ENCODE measurements at regions of chr6 and their contacts with region 1.

Region 1: DNA sequence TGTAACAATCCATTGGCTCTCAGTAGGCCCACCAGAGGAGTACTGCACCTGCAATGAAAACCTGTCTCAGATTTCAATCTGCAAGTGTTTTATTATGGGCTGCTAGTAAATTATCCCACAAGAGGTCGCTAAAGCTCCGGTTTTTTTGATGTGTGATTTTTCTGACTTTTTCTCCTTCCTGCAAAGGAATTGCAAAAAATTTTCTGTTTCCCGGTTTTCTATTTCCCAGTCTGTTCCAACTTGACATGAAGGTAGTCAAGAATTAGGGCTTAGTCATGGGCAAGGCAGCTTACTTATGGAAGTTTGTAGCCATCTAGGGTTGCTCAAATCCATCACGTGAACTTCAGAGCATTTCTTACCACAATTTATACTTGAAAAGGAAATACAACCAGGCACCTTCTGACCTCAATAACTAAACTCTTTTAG is 38.5 kb upstream of the AHI1 start:
- DNase-seq: peak; percentile 78
- ATAC-seq: peak; percentile 48
- H3K4me3 ChIP-seq: no peak overlapping the region
- H3K27ac ChIP-seq: no peak overlapping the region
- H3K4me1 ChIP-seq: peaks cover 34% of the 10 kb centered on the region
- H3K27me3 ChIP-seq: no peaks in the 10 kb centered on the region
- CTCF ChIP-seq: peak; percentile 74

Region 2: DNA sequence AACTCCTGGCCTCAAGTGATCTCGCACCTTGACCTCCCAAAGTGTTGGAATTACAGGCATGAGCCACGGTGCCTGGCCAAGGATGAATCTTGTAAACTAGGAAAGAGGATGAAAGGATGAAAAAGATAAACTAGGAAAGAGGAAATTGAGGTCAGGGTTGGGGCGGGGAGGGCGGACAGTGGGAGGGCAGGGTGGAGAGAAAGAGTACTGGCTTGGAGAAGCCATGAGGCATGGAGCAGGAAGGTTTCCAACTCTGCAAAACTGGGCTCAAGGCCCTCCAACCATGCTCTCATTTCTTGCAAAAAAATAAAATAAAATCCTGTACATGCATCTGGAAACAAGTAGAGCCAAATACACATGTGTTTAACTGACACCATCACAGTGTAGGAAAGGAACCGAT is 961.5 kb before region 1 on chr6:
- CTCF ChIA-PET with region 1: no interaction called
- POLR2A ChIA-PET with region 1: no interaction called
- intact Hi-C with region 1: no loop called
- DNase-seq: no peak
- ATAC-seq: no peak
- H3K4me3 ChIP-seq: no peak overlapping the region
- H3K27ac ChIP-seq: no peak overlapping the region
- H3K4me1 ChIP-seq: no peaks in the 10 kb centered on the region
- H3K27me3 ChIP-seq: no peaks in the 10 kb centered on the region
- CTCF ChIP-seq: no peak

Region 3: DNA sequence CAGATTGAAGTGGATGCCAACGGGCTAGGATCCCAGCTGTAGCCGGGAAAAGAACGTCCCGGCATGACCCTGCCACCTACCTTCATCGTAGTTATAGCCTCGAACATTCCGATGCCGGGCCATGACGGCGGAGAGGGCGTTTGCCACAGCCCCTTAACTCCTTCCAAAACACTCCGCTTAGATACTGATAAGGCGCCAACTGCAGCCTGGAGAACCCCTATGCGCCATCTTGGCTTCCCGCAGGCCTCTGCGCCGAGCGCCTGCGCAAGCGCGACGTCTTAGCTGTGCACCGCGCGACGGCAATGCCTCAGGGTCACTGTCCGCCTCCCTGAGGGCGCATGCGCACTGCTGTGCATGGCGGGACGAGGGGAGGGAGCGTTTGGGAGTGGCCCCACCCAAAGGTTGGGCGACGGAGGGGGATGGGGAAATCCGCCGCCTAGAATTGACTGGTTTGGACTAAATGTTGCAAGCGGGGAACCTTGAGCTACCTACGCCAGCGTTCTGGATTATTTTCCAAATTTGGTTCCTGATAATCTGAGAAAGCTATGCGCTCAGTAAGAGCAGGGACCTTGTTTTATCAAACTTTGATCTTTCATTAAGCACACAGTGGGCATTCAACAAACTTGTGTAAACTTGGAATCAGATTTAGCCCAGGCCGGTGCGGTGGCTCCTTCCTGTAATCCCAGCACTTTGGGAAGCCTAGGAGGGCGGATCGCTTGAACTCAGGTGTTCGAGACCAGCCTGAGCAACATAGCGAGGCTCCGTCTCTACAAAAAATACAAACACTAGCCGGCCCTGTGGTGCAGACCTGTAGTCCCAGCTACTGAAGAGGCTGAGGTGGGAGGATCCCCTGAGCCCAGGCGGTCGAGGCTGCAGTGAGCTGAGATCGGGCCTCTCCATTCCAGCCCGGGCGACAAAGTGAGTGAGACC is 481.2 kb before region 1 on chr6 and contains the start of gene HBS1L:
- CTCF ChIA-PET with region 1: no interaction called
- POLR2A ChIA-PET with region 1: no interaction called
- intact Hi-C with region 1: no loop called
- DNase-seq: peak; percentile 98
- ATAC-seq: peak; percentile 98
- H3K4me3 ChIP-seq: peak within 1 kb of the TSS; percentile 93
- H3K27ac ChIP-seq: peak within 1 kb of the TSS; percentile 31
- H3K4me1 ChIP-seq: peaks cover 12% of the 10 kb centered on the region
- H3K27me3 ChIP-seq: no peaks in the 10 kb centered on the region
- CTCF ChIP-seq: no peak
- total RNA-seq, gene HBS1L: 44.9 and 53.2 TPM in 2 replicates

Region 4: DNA sequence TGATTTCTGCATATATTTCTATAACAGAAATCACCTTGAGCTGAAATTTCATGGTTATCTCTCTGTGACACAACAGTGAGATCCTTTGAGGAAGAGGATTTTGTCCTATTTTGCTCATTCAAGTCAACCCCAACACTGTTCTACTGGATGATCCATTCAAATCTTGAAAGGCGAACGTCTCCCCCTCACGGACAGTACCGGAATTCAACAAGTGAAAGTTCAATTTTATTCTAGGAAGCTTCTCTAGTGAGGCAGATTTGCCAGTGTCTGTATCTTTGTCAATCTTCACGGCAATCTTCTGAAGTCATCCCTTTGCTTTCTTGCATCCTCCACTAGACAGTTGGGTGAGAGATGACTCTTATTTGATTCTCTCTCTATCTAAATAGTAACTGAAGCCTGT is 223.8 kb after region 1 on chr6:
- CTCF ChIA-PET with region 1: no interaction called
- POLR2A ChIA-PET with region 1: no interaction called
- intact Hi-C with region 1: loop called (anchors 2 kb)
- DNase-seq: peak; percentile 65
- ATAC-seq: no peak
- H3K4me3 ChIP-seq: no peak overlapping the region
- H3K27ac ChIP-seq: no peak overlapping the region
- H3K4me1 ChIP-seq: no peaks in the 10 kb centered on the region
- H3K27me3 ChIP-seq: no peaks in the 10 kb centered on the region
- CTCF ChIP-seq: peak; percentile 62

Region 5: GRCh38 chr6:135851442-135852271 is 315.7 kb after region 1 on chr6 and contains the start of gene PDE7B:
- CTCF ChIA-PET with region 1: no interaction called
- POLR2A ChIA-PET with region 1: no interaction called
- intact Hi-C with region 1: loop called (anchors 10 kb)
- DNase-seq: peak; percentile 71
- ATAC-seq: peak; percentile 98
- H3K4me3 ChIP-seq: peak within 1 kb of the TSS; percentile 60
- H3K27ac ChIP-seq: no peak within 1 kb of the TSS
- H3K4me1 ChIP-seq: peaks cover 11% of the 10 kb centered on the region
- H3K27me3 ChIP-seq: no peaks in the 10 kb centered on the region
- CTCF ChIP-seq: no peak
- total RNA-seq, gene PDE7B: not detected in 2 replicates

Region 6: DNA sequence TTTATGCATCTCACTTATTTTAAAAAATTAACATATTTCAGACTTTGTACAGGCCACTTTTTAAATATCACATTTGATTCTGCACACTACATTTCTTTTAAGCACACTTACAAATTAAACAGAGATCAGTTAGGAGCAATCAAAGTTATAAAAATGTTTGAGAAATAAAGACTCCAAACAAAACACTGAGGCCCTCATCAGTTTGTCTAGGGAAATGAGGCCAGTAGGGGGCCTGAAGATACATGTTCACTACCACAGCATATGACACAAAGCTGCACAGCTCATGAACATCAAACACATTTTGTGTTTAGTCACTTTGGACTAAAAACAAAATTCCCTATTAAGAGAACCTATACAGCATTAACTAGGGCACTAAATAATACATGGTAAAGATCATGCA is 496.0 kb after region 1 on chr6:
- CTCF ChIA-PET with region 1: no interaction called
- POLR2A ChIA-PET with region 1: no interaction called
- intact Hi-C with region 1: loop called (anchors 5 kb)
- DNase-seq: peak; percentile 44
- ATAC-seq: peak; percentile 76
- H3K4me3 ChIP-seq: no peak overlapping the region
- H3K27ac ChIP-seq: no peak overlapping the region
- H3K4me1 ChIP-seq: no peaks in the 10 kb centered on the region
- H3K27me3 ChIP-seq: no peaks in the 10 kb centered on the region
- CTCF ChIP-seq: peak; percentile 67

Region 7: DNA sequence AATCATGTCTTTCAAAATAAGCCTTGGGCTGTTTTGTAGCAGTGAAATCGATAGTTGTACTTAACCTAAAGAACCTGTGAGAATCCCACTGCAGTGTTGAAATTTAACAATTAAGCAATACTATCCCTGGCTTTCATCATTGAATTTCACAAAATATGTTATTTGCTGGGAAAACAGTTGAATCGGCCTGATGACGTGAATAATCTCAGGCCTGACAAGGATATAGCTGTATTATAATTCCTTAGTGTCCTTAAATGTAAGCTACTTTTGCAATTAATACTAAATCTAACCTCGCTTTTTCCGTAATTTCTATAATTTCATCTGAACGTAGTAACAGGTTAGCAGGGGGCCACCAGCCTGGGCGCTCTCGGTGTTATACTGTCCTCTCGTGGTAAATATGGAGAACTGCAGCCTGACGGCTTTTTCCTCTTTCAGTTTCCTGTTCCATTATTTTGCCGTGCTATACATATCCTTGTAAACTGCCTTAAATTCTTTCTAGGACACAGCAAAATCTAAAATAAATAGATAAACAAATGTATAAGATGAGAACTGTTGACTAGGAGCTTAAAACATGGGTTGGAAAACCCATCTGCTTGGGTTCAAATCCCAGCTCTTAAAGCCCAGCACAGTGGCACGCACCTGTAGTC is 690.1 kb after region 1 on chr6:
- CTCF ChIA-PET with region 1: no interaction called
- POLR2A ChIA-PET with region 1: no interaction called
- intact Hi-C with region 1: loop called (anchors 1 kb)
- DNase-seq: peak; percentile 68
- ATAC-seq: peak; percentile 68
- H3K4me3 ChIP-seq: peak overlapping the region; percentile 44; the same call in 1 of the 2 replicates
- H3K27ac ChIP-seq: no peak overlapping the region
- H3K4me1 ChIP-seq: no peaks in the 10 kb centered on the region
- H3K27me3 ChIP-seq: no peaks in the 10 kb centered on the region
- CTCF ChIP-seq: peak; percentile 97